MCF 10A (cell line): ENCODE measurements at regions of chr9 and their contacts with region 1.

Region 1: GRCh38 chr9:127396808-127397497 is at the start of gene SLC2A8:
- DNase-seq: peak; percentile 100
- H3K4me3 Mint-ChIP-seq: peak within 1 kb of the TSS; percentile 74
- H3K27ac Mint-ChIP-seq: no peak within 1 kb of the TSS
- H3K4me1 Mint-ChIP-seq: peaks cover 4% of the 10 kb centered on the region
- H3K27me3 Mint-ChIP-seq: no peaks in the 10 kb centered on the region
- CTCF ChIP-seq: peak; percentile 15
- total RNA-seq, gene SLC2A8: 13.7 and 14.0 TPM in 2 replicates

Region 2: DNA sequence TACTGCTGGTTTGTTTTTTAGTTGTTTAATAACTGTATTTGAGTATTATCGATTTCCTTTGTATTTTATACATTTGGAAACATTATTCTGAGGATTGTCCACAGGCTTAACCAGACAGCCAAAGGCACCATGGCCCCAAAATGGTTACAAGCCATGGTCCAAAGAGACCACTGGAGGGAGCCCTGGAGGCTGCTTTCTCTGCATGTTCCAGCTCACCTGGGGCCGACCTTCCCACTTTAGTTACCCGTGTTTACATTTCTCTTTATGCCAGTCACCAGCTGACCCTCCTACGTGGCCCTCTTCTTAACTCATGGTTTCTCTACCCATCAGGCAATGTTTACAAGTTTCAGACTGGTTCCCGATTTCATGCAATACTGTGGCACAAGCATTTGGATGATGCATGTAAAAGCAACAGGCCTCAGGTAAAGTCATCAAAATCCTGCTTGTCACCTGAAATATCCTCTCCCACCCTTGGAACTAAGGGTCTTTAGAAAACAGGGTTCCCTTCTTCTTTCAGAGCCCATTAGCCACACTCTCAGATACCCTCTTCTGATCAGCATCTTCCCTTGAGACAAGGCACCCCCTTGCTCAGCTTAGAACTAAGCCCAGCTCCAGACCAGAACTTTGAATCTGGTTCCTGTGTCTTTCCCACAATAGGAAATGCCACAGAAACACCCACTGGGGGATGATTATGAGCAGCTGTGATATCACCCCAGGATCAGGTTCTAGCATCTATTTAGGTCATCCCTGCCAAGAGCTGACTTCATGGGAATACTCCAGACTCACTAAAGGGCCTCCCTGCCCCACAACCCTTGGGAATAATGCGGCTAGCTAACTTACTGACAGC is 182.3 kb before region 1 on chr9:
- CTCF ChIA-PET with region 1: interaction called, 6 read pairs
- POLR2A ChIA-PET with region 1: interaction called, 8 read pairs
- intact Hi-C with region 1: loop called (anchors 2 kb)
- DNase-seq: peak; percentile 76
- H3K4me3 Mint-ChIP-seq: no peak overlapping the region
- H3K27ac Mint-ChIP-seq: no peak overlapping the region
- H3K4me1 Mint-ChIP-seq: peaks cover 6% of the 10 kb centered on the region
- H3K27me3 Mint-ChIP-seq: peaks cover 12% of the 10 kb centered on the region
- CTCF ChIP-seq: peak; percentile 73

Region 3: GRCh38 chr9:127311239-127311741 is 85.7 kb before region 1 on chr9:
- CTCF ChIA-PET with region 1: interaction called, 10 read pairs
- POLR2A ChIA-PET with region 1: interaction called, 6 read pairs
- intact Hi-C with region 1: loop called (anchors 1 kb)
- DNase-seq: peak; percentile 81
- H3K4me3 Mint-ChIP-seq: peak overlapping the region; percentile 8
- H3K27ac Mint-ChIP-seq: peak overlapping the region; percentile 32
- H3K4me1 Mint-ChIP-seq: peaks cover 29% of the 10 kb centered on the region
- H3K27me3 Mint-ChIP-seq: no peaks in the 10 kb centered on the region
- CTCF ChIP-seq: peak; percentile 55

Region 4: GRCh38 chr9:127423934-127424675 is 27.2 kb after region 1 on chr9 and contains the start of gene ZNF79:
- CTCF ChIA-PET with region 1: interaction called, 3 read pairs
- POLR2A ChIA-PET with region 1: interaction called, 35 read pairs
- intact Hi-C with region 1: no loop called
- DNase-seq: peak; percentile 92
- H3K4me3 Mint-ChIP-seq: peak within 1 kb of the TSS; percentile 99
- H3K27ac Mint-ChIP-seq: peak within 1 kb of the TSS; percentile 98
- H3K4me1 Mint-ChIP-seq: peaks cover 21% of the 10 kb centered on the region
- H3K27me3 Mint-ChIP-seq: no peaks in the 10 kb centered on the region
- CTCF ChIP-seq: no peak
- total RNA-seq, gene ZNF79: 7.9 and 9.3 TPM in 2 replicates

Region 5: DNA sequence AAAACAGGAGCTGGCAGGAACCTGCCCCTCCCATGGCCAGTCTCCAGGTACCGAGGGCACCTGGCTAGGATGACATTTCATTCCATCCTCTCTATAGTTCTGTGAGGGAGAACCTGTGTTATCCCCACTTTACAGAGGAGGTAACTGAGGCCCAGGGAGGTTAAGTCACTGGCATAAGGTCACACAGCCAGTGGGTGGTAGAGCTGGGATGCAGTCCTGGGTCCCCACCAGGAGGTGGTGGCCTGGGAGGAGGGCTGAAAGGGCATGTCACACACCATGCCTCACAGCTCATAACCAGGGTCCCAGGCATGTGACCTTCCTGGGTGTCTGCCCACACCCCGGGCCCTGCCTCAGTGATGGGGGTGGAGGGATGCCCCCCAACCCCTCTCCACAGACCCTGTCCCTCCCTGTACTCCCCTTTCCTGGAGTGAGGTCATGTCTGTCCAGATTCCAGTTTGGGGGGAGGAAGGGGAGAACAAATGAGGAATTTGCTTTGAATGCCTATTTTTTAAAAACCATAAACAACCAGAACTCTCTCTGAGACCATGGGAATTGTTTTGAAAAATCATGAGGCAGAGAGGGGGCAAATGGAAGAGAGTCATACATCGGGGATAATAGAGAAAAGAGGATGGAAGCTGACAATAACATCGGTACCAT is 137.4 kb after region 1 on chr9:
- CTCF ChIA-PET with region 1: no interaction called
- POLR2A ChIA-PET with region 1: no interaction called
- intact Hi-C with region 1: no loop called
- DNase-seq: no peak
- H3K4me3 Mint-ChIP-seq: no peak overlapping the region
- H3K27ac Mint-ChIP-seq: peak overlapping the region; percentile 67
- H3K4me1 Mint-ChIP-seq: peaks cover 22% of the 10 kb centered on the region
- H3K27me3 Mint-ChIP-seq: no peaks in the 10 kb centered on the region
- CTCF ChIP-seq: no peak

Region 6: GRCh38 chr9:128771745-128772519 is 1375.0 kb after region 1 on chr9 and contains the start of gene ZER1:
- CTCF ChIA-PET with region 1: no interaction called
- POLR2A ChIA-PET with region 1: no interaction called
- intact Hi-C with region 1: no loop called
- DNase-seq: peak; percentile 85
- H3K4me3 Mint-ChIP-seq: peak within 1 kb of the TSS; percentile 96
- H3K27ac Mint-ChIP-seq: peak within 1 kb of the TSS; percentile 92
- H3K4me1 Mint-ChIP-seq: peaks cover 11% of the 10 kb centered on the region
- H3K27me3 Mint-ChIP-seq: no peaks in the 10 kb centered on the region
- CTCF ChIP-seq: no peak
- total RNA-seq, gene ZER1: 19.5 and 26.6 TPM in 2 replicates